GM12878 (cell line): ENCODE measurements at regions of chr13 and their contacts with region 1.

Region 1: GRCh38 chr13:51452361-51453206 is at the start of gene INTS6:
- DNase-seq: peak; percentile 92
- ATAC-seq: peak; percentile 84
- H3K4me3 ChIP-seq: peak within 1 kb of the TSS; percentile 97
- H3K27ac ChIP-seq: peak within 1 kb of the TSS; percentile 97
- H3K4me1 ChIP-seq: peaks cover 5% of the 10 kb centered on the region; the same call in 1 of the 2 replicates
- H3K27me3 ChIP-seq: no peaks in the 10 kb centered on the region
- CTCF ChIP-seq: no peak
- EP300 ChIP-seq: no peak
- POLR2A ChIP-seq: peak; percentile 100
- RAD21 ChIP-seq: no peak
- polyA plus RNA-seq, gene INTS6: 7.2 to 10.4 TPM

Region 2: DNA sequence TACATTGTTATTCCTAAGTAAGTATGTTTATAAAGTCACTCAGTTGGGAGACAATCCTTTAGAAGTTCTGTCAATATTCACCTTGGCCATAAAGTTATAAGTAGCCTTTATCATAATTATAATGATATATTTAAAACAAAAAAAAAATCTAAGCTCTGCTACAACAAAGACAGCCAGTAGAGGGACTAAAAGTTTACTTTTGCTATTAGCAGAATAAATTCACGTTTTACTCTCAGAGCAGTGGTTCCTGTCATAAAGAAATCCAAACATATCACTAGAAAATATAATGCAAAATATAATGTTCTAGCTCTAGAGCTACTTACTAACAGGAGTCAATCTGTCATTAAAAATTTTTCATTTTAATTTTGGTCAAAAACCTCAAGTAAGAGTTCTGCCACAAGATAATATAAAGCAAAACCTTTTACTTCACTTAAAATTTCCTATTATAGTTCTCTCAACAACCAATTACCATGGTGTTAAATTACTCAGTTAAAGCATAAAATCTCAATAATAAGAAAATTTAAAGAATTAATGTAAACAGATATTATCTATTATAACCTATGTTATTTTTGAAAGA is 17.5 kb before region 1 on chr13:
- CTCF ChIA-PET with region 1: interaction called, 6 read pairs
- POLR2A ChIA-PET with region 1: interaction called, 9 read pairs
- RAD21 ChIA-PET with region 1: interaction called, 15 read pairs
- SMC1A ChIA-PET with region 1: interaction called, 6 read pairs
- in situ Hi-C with region 1: no loop called
- intact Hi-C with region 1: no loop called
- DNase-seq: no peak
- ATAC-seq: peak; percentile 67
- H3K4me3 ChIP-seq: no peak overlapping the region
- H3K27ac ChIP-seq: no peak overlapping the region
- H3K4me1 ChIP-seq: no peaks in the 10 kb centered on the region
- H3K27me3 ChIP-seq: no peaks in the 10 kb centered on the region
- CTCF ChIP-seq: peak; percentile 39 to 61 (median 39); a peak in 4 of 6 replicates
- EP300 ChIP-seq: no peak
- POLR2A ChIP-seq: no peak
- RAD21 ChIP-seq: peak; percentile 78

Region 3: GRCh38 chr13:51552027-51552426 is 99.4 kb after region 1 on chr13:
- CTCF ChIA-PET with region 1: no interaction called
- POLR2A ChIA-PET with region 1: interaction called, 6 read pairs
- RAD21 ChIA-PET with region 1: interaction called, 21 read pairs
- SMC1A ChIA-PET with region 1: interaction called, 18 read pairs
- in situ Hi-C with region 1: no loop called
- intact Hi-C with region 1: no loop called
- DNase-seq: no peak
- ATAC-seq: peak; percentile 73
- H3K4me3 ChIP-seq: no peak overlapping the region
- H3K27ac ChIP-seq: no peak overlapping the region
- H3K4me1 ChIP-seq: peaks cover 3% of the 10 kb centered on the region; the same call in 1 of the 2 replicates
- H3K27me3 ChIP-seq: no peaks in the 10 kb centered on the region
- CTCF ChIP-seq: no peak
- EP300 ChIP-seq: no peak
- POLR2A ChIP-seq: no peak
- RAD21 ChIP-seq: no peak

Region 4: DNA sequence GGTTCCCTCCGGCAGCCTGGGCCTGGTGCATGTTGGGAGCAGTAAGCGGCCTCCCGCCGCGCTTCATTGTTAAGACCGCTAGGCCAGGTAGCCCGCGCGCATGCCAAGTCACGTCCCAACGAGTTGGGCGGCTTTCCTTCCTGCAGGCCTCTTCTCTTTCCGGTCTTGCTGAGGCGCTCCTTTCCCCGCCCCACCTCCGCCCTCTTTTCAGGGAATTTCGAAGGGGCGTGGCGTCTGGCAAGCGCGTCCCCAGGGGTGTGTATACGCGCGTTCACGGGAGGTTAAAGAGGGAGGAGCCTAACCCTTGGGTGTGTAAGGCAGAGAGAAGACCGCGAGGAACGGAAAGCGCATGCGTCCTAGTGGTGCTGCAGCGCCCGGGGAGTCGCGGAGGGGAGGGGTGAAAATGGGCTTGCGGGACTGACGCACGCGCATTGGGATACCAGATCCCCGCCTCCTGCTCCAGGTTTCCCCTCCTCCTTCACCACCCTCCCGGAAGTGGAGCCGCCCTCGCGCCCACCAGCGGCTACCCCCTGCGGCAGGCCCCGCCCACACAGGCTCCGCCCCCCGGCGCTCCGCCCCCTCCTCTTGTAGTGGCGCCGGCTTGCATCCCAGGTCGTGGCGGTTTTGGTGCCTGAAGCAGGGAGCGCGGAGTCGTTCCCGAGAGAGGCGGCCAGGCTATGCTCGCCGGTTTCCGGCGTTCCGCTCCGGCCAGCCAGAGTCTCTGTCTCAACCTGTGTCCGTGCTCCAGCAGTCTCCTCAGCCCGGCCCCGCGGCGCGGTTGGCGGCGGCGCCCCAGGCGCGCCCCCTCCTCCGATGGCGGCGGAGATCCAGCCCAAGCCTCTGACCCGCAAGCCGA is 131.5 kb after region 1 on chr13 and contains the start of gene WDFY2:
- CTCF ChIA-PET with region 1: interaction called, 6 read pairs
- POLR2A ChIA-PET with region 1: interaction called, 15 read pairs
- RAD21 ChIA-PET with region 1: interaction called, 45 read pairs
- SMC1A ChIA-PET with region 1: interaction called, 18 read pairs
- in situ Hi-C with region 1: loop called (anchors 10 kb)
- intact Hi-C with region 1: loop called (anchors 1 kb)
- DNase-seq: peak; percentile 99
- ATAC-seq: peak; percentile 86
- H3K4me3 ChIP-seq: peak within 1 kb of the TSS; percentile 95
- H3K27ac ChIP-seq: peak within 1 kb of the TSS; percentile 64
- H3K4me1 ChIP-seq: peaks cover 9% of the 10 kb centered on the region; the same call in 1 of the 2 replicates
- H3K27me3 ChIP-seq: no peaks in the 10 kb centered on the region
- CTCF ChIP-seq: peak in 1 of 3 experiments; percentile 24; a peak in 2 of 6 replicates
- EP300 ChIP-seq: no peak
- POLR2A ChIP-seq: peak; percentile 72
- RAD21 ChIP-seq: peak; percentile 3; the same call in 1 of the 2 replicates
- polyA plus RNA-seq, gene WDFY2: 2.1 to 2.7 TPM

Region 5: DNA sequence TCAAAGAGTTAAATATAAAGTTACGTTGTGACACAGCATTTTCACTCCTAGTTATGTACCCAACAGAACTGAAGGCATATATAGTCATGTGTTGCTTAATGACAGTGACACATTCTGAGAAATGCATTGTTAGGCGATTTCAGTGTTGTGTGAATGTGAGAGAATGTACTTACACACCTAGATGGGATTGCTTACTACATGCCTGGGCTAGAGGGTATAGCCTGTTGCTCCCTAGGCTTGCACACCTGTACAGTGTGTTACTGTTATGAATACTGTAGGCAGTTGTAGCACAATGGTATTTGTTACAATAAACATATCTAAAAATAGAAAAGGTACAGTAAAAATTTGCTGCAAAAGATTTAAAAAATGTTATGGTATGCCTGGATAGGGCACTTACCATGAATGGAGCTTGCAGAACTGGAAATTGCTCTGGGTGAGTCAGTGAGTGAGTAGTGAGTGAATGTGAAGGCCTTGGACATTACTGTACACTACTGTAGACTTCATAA is 262.1 kb after region 1 on chr13:
- CTCF ChIA-PET with region 1: no interaction called
- POLR2A ChIA-PET with region 1: no interaction called
- RAD21 ChIA-PET with region 1: interaction called, 3 read pairs
- SMC1A ChIA-PET with region 1: no interaction called
- in situ Hi-C with region 1: no loop called
- intact Hi-C with region 1: loop called (anchors 5 kb)
- DNase-seq: peak; percentile 78
- ATAC-seq: peak; percentile 96
- H3K4me3 ChIP-seq: no peak overlapping the region
- H3K27ac ChIP-seq: peak overlapping the region; percentile 72
- H3K4me1 ChIP-seq: peaks cover 14% of the 10 kb centered on the region
- H3K27me3 ChIP-seq: no peaks in the 10 kb centered on the region
- CTCF ChIP-seq: no peak
- EP300 ChIP-seq: peak in 1 of 2 experiments; percentile 50; a peak in 1 of 4 replicates
- POLR2A ChIP-seq: no peak
- RAD21 ChIP-seq: no peak